Mammary epithelial cell (primary cell): ENCODE measurements at regions of chr19 and their contacts with region 1.

Region 1: DNA sequence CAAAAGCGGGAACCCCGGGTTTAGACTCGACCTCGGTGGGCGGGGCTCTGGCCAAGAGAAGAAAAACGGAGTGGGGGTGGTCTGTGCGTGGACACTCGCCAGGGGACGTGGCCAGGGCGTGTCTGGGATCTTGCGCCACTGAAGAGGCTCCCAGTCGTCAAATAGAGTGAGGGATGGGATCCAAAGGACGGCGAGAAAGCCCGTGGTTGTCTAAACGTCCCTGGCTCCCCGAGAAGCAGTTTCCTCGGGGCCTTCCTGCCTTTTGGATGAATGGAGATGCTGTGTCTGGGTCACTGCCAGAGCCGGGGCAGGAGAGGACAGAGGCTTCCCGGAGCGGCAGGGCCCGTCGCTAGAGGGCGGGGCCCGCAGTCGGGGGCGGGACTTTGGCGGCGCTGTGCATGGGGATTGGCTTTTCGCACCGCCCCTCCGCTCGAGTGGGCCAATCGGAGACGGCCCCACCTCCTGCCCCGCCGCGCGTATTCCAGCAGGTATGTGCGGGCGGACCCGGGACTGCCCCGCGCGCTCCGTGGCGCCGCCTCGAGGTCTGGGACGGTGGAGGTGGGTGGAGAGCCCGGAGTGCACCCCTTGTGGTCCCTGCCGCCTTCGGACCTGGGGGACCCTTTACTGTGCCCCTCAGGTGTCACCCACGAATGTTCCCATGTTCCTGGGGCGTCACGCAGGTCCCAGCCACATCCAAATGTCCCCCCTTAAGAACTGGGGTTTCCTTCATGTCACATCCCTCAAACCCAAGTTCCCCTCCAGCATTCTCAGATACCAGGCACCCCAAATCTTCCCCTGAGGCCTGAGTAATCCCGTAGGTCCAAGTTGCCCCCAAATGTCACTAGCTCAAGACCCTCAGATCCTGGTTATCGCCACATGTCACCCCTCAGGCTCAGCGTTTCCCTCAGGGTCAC is 38.3 kb downstream of the ZSWIM4 start:
- DNase-seq: peak; percentile 87
- H3K4me3 ChIP-seq: no peak overlapping the region
- H3K27ac ChIP-seq: peak overlapping the region; percentile 64
- H3K4me1 ChIP-seq: peaks cover 26% of the 10 kb centered on the region
- H3K27me3 ChIP-seq: no peaks in the 10 kb centered on the region
- CTCF ChIP-seq: peak; percentile 35 to 64

Region 2: GRCh38 chr19:13731147-13731964 is 102.2 kb before region 1 on chr19:
- CTCF ChIA-PET with region 1: no interaction called
- dilution Hi-C with region 1: loop called (anchors 10 kb)
- in situ Hi-C with region 1: no loop called
- intact Hi-C with region 1: no loop called
- DNase-seq: peak; percentile 93
- H3K4me3 ChIP-seq: peak overlapping the region; percentile 47 to 62 (median 54)
- H3K27ac ChIP-seq: peak overlapping the region; percentile 97
- H3K4me1 ChIP-seq: peaks cover 24% of the 10 kb centered on the region
- H3K27me3 ChIP-seq: no peaks in the 10 kb centered on the region
- CTCF ChIP-seq: no peak

Region 3: GRCh38 chr19:13758795-13759194 is 74.8 kb before region 1 on chr19:
- CTCF ChIA-PET with region 1: no interaction called
- dilution Hi-C with region 1: no loop called
- in situ Hi-C with region 1: no loop called
- intact Hi-C with region 1: no loop called
- DNase-seq: no peak
- H3K4me3 ChIP-seq: no peak overlapping the region
- H3K27ac ChIP-seq: no peak overlapping the region
- H3K4me1 ChIP-seq: no peaks in the 10 kb centered on the region
- H3K27me3 ChIP-seq: no peaks in the 10 kb centered on the region
- CTCF ChIP-seq: no peak

Region 4: DNA sequence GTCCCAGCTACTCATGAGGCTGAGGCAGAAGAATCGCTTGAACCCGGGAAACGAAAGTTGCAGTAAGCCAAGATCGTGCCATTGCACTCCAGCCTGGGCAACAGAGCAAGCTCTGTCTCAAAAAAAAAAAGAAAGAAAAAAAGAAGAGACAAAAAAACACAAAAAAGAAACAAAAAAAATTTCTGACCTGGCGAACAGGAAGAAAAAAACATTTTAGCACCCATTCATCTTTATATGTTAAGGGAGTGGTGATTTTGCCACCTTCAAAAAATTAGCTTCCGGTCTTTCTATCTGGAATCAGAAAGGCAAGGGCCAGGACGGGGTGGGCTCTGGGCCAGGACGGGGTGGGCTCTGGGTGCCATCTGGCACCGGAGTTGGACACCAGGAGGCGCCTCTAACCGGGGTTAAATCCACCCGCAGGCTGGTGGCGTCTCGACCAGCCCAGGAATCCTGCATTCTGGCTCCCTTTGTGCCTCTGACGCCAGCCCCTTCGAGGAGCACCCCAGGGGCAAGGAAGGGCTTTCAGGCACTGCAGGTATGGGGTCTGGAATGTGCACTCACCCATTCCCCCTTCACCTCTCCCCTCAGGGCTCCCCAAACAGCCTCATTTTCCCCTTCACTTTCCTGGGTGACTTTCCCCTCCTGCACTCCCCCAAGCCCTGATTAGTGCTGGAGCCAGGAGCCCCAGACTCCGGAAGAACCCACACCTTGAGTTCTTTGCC is 48.7 kb before region 1 on chr19:
- CTCF ChIA-PET with region 1: no interaction called
- dilution Hi-C with region 1: no loop called
- in situ Hi-C with region 1: no loop called
- intact Hi-C with region 1: loop called (anchors 2 kb)
- DNase-seq: peak; percentile 37
- H3K4me3 ChIP-seq: no peak overlapping the region
- H3K27ac ChIP-seq: no peak overlapping the region
- H3K4me1 ChIP-seq: peaks cover 19% of the 10 kb centered on the region
- H3K27me3 ChIP-seq: no peaks in the 10 kb centered on the region
- CTCF ChIP-seq: peak; percentile 16 to 80

Region 5: DNA sequence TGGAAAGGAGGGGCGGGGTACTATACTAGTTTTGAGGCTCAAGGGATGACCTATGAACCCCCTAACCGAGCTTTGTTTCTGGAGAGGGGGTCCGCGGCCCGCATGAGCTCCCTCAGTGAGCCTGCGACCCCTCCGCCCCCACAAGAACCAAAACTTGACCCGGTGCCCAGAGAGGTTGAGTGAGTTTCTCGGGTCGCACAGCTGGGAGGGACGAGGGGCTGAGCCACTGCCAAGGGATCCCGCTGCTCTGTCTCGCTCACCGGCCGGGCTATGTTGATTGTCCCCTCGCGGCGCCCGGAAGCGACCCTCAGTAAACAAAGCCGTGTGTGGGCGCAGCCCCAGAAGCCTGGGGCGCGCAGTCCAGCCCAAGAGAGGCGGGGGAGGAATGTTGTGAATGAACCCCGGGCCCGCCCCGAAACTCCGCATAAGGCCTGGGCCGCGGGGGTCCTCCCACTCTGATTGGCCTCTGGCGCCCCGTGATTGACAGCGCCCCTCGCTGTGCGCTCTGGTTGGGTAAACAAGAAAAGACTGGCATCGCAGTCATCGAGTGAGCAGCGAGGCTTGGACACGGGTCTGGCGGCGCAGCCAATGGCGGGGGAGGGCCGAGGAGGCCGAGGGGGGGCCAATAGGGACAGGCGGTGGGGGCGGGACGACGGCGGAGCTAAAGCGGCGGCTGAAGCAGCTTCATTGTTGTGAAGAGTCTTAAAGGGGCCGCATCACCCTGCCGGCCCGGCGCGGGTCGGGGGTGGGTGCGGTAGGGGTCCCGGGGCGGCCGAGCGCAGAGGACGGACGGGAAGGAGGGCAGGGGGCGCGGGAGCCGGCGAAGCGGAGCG is 38.6 kb before region 1 on chr19 and contains the start of gene ZSWIM4:
- CTCF ChIA-PET with region 1: no interaction called
- dilution Hi-C with region 1: loop called (anchors 5 kb)
- in situ Hi-C with region 1: no loop called
- intact Hi-C with region 1: no loop called
- DNase-seq: peak; percentile 100
- H3K4me3 ChIP-seq: peak within 1 kb of the TSS; percentile 79 to 87 (median 79)
- H3K27ac ChIP-seq: peak within 1 kb of the TSS; percentile 96
- H3K4me1 ChIP-seq: peaks cover 23% of the 10 kb centered on the region
- H3K27me3 ChIP-seq: no peaks in the 10 kb centered on the region
- CTCF ChIP-seq: no peak
- total RNA-seq, gene ZSWIM4: 3.2 to 5.4 TPM

Region 6: GRCh38 chr19:13817615-13818371 is 15.8 kb before region 1 on chr19:
- CTCF ChIA-PET with region 1: no interaction called
- dilution Hi-C with region 1: no loop called
- in situ Hi-C with region 1: no loop called
- intact Hi-C with region 1: no loop called
- DNase-seq: no peak
- H3K4me3 ChIP-seq: no peak overlapping the region
- H3K27ac ChIP-seq: no peak overlapping the region
- H3K4me1 ChIP-seq: no peaks in the 10 kb centered on the region
- H3K27me3 ChIP-seq: no peaks in the 10 kb centered on the region
- CTCF ChIP-seq: no peak

Region 7: DNA sequence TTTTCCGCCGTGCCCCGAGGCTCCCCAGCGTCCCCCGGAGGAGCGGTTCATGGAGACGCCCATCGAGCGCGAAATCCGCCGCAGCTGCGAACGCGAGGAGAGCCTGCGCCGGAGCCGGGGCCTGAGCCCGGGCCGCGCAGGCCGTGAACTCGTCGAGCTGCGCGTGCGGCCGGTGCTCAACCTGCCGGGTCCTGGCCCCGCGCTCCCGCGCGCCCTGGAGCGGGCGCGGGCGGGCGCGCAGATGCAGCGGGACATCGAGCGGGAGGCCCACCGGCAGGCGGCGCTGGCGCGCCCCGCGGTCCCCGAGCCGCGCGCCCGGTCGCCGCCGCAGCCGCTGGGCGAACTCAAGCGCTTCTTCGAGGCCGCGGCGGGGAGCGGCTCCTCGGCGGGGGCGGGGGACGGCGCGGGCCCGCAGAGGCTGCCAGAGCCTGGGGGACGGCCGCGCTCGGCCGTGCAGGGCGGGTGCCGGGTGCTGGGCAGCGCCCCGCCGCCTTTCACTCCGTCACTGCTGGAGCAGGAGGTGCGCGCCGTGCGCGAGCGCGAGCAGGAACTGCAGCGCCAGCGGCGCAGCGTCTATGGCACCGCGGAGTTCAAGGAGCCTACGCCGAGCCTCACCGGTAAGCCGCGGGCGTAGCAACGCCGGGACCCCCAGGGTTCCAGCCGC is 239.8 kb after region 1 on chr19:
- CTCF ChIA-PET with region 1: no interaction called
- dilution Hi-C with region 1: no loop called
- in situ Hi-C with region 1: no loop called
- intact Hi-C with region 1: no loop called
- DNase-seq: peak; percentile 74
- H3K4me3 ChIP-seq: peak overlapping the region; percentile 48 to 84 (median 49)
- H3K27ac ChIP-seq: peak overlapping the region; percentile 29
- H3K4me1 ChIP-seq: peaks cover 26% of the 10 kb centered on the region
- H3K27me3 ChIP-seq: no peaks in the 10 kb centered on the region
- CTCF ChIP-seq: peak in 1 of 2 donors; percentile 38